CD14-positive monocyte (primary cell): ENCODE measurements at regions of chr17 and their contacts with region 1.

Region 1: DNA sequence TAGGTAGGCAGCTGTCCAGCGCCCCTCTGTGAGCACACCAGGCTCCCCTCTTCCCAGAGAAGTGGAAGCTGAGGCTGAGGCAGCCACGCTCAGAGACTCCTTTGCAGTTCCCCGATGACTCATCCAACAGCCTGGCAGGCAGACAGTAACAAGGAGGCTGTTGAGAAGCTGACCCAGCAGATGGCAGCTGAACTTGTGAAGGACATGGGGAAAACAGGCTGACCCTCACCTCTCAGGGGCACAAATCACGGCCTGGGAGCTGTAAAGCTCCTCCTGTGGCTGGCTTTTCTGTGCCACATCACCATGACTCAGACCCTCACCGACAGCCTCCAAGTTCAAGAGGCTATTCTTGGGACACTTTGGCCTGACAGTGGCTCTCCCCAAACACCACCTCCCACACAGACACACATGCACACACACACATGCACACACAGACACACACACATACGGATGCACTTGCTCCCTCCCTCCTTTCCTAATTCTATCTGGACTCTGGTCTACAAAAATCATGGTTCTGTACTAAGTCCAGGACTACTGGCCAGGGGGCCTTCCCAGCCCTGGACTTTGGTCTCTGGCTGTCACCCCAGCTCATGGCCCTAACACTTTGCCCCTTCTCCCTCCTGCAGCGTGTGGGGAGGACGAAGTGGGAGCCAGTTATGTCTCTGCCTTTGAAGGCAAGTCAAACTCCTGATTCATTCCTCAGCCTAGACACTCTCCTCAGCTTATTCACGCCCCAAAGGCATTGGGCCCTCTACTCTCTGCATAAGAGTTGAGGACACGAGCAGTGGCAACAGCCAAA is 23.2 kb downstream of the MAP3K14 start:
- DNase-seq: peak; percentile 88 to 95 (median 94)
- H3K4me3 ChIP-seq: peak overlapping the region in 1 of 3 experiments; percentile 44
- H3K4me3 Mint-ChIP-seq: peak overlapping the region; percentile 20 to 57
- H3K27ac ChIP-seq: peak overlapping the region; percentile 34 to 77
- H3K27ac Mint-ChIP-seq: peak overlapping the region; percentile 85 to 94 (median 88)
- H3K4me1 ChIP-seq: peaks cover 86 to 89% of the 10 kb centered on the region in 2 donors
- H3K4me1 Mint-ChIP-seq: peaks cover 88% of the 10 kb centered on the region
- H3K27me3 ChIP-seq: no peaks in the 10 kb centered on the region
- H3K27me3 Mint-ChIP-seq: peaks cover 0 to 2% (median 0%) of the 10 kb centered on the region in 3 donors
- CTCF ChIP-seq: no peak

Region 2: GRCh38 chr17:45228763-45229539 is 64.7 kb before region 1 on chr17:
- intact Hi-C with region 1: loop called in 1 of 2 experiments (anchors 2 kb)
- DNase-seq: peak; percentile 99 to 100 (median 99)
- H3K4me3 ChIP-seq: peak overlapping the region; percentile 15 to 99 (median 31)
- H3K4me3 Mint-ChIP-seq: peak overlapping the region; percentile 95 to 99
- H3K27ac ChIP-seq: peak overlapping the region; percentile 93 to 99
- H3K27ac Mint-ChIP-seq: peak overlapping the region; percentile 98 to 100 (median 100)
- H3K4me1 ChIP-seq: peaks cover 95 to 97% of the 10 kb centered on the region in 2 donors
- H3K4me1 Mint-ChIP-seq: peaks cover 96% of the 10 kb centered on the region
- H3K27me3 ChIP-seq: no peaks in the 10 kb centered on the region
- H3K27me3 Mint-ChIP-seq: peaks cover 0 to 4% (median 0%) of the 10 kb centered on the region in 3 donors
- CTCF ChIP-seq: no peak

Region 3: DNA sequence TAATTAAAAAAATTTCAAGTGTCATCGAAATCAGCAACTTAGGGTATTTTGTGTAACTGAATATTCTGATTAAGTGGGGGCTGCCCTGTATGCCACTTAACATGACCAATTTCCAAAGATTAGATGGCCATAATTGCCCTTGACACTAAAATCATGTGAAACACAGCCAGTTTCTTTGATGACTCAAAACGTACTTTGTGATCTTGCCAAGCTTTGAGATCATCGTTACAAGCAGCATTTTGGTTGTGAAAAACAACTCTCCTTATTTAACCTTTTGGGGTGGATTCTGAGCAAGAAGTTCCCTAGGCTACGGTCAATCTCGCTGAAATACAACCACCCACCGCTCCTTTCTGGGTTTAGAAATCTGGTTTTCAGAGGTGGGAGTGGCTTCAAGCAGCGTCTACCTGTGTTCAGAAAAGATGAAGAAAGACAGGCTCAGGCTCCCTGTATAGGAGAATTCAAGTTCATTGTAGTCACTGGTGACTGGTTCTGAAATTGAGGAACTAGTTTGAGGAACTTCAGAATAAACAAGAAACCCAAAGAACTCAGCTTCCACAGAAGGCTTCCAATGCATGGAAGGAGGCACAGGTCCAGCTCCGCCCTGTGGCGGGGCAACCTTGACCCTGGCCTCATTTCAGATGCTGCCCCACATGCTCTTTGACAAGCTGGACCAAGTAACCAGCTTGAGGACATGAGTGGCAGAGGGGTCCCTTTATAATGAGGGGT is 13.8 kb after region 1 on chr17:
- intact Hi-C with region 1: loop called in 1 of 2 experiments (anchors 2 kb)
- DNase-seq: peak; percentile 81 to 93 (median 91)
- H3K4me3 ChIP-seq: peak overlapping the region in 1 of 3 experiments; percentile 30
- H3K4me3 Mint-ChIP-seq: peak overlapping the region; percentile 24 to 46
- H3K27ac ChIP-seq: peak overlapping the region; percentile 77 to 93
- H3K27ac Mint-ChIP-seq: peak overlapping the region; percentile 96 to 100 (median 99)
- H3K4me1 ChIP-seq: peaks cover 85 to 96% of the 10 kb centered on the region in 2 donors
- H3K4me1 Mint-ChIP-seq: peaks cover 81% of the 10 kb centered on the region
- H3K27me3 ChIP-seq: no peaks in the 10 kb centered on the region
- H3K27me3 Mint-ChIP-seq: no peaks in the 10 kb centered on the region
- CTCF ChIP-seq: no peak

Region 4: GRCh38 chr17:45325810-45326209 is 32.2 kb after region 1 on chr17:
- intact Hi-C with region 1: loop called (anchors 5 kb)
- DNase-seq: no peak
- H3K4me3 ChIP-seq: no peak overlapping the region
- H3K4me3 Mint-ChIP-seq: no peak overlapping the region
- H3K27ac ChIP-seq: no peak overlapping the region
- H3K27ac Mint-ChIP-seq: no peak overlapping the region
- H3K4me1 ChIP-seq: peaks cover 23 to 26% of the 10 kb centered on the region in 2 donors
- H3K4me1 Mint-ChIP-seq: peaks cover 31% of the 10 kb centered on the region
- H3K27me3 ChIP-seq: no peaks in the 10 kb centered on the region
- H3K27me3 Mint-ChIP-seq: peaks cover 0 to 5% (median 3%) of the 10 kb centered on the region in 3 donors
- CTCF ChIP-seq: no peak

Region 5: DNA sequence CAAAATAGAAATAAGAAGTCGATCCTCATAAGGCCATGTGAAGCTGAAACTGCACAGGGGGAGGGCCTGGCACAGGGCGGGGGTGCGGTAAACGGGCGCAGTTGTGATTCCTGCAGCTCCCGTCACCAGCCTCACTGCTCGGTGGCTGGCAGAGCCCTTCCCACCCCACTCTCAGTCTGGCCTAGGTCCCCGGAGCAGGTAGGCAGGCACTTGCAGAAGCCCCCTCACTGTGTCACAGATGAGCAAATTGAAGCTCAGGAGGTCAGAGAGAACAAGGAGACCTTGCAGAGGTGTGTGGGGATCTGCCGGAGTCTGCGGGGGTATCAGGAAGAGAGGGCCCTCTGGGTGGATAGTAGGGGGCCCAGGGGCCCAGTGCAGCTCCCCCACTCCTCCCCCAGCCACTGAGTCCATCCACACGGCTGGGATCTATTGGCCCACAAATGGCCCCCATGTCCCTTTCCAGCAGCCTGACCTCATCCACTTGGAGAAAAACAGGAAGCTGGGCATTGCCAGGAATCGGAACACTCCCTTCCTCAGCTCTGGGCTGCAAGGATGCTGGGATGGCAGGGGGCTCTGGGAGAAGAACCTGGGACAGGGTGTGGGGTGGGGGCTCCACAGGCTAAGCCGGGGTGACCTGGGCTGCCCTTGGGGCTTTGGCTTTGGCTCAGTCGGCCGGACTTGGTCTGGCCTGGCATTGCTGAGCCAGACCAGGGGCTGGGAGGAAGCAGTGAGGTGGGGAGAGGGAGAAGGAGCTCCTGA is 44.6 kb after region 1 on chr17:
- intact Hi-C with region 1: no loop called
- DNase-seq: no peak
- H3K4me3 ChIP-seq: no peak overlapping the region
- H3K4me3 Mint-ChIP-seq: no peak overlapping the region
- H3K27ac ChIP-seq: no peak overlapping the region
- H3K27ac Mint-ChIP-seq: no peak overlapping the region
- H3K4me1 ChIP-seq: peaks cover 5 to 6% of the 10 kb centered on the region in 2 donors
- H3K4me1 Mint-ChIP-seq: peaks cover 8% of the 10 kb centered on the region
- H3K27me3 ChIP-seq: no peaks in the 10 kb centered on the region
- H3K27me3 Mint-ChIP-seq: peaks cover 0 to 6% (median 5%) of the 10 kb centered on the region in 3 donors
- CTCF ChIP-seq: no peak